Activated CD4-positive, alpha-beta T cell treated with anti-CD3 and anti-CD28 coated beads for 36 hours (primary cell): ENCODE measurements at regions of chr7 and their contacts with region 1.

Region 1: GRCh38 chr7:31919678-31920369 is 150.4 kb downstream of the PDE1C start:
- DNase-seq: no peak
- ATAC-seq: no peak
- H3K4me3 Mint-ChIP-seq: no peak overlapping the region
- H3K27ac Mint-ChIP-seq: no peak overlapping the region
- H3K4me1 Mint-ChIP-seq: no peaks in the 10 kb centered on the region
- H3K27me3 Mint-ChIP-seq: no peaks in the 10 kb centered on the region

Region 2: GRCh38 chr7:32137059-32137458 is 217.2 kb after region 1 on chr7:
- CTCF ChIA-PET with region 1: no interaction called
- POLR2A ChIA-PET with region 1: no interaction called
- intact Hi-C with region 1: loop called in 1 of 2 experiments (anchors 10 kb)
- DNase-seq: no peak
- ATAC-seq: no peak
- H3K4me3 Mint-ChIP-seq: no peak overlapping the region
- H3K27ac Mint-ChIP-seq: no peak overlapping the region
- H3K4me1 Mint-ChIP-seq: no peaks in the 10 kb centered on the region
- H3K27me3 Mint-ChIP-seq: no peaks in the 10 kb centered on the region